HepG2 (cell line): ENCODE measurements at regions of chr3 and their contacts with region 1.

Region 1: GRCh38 chr3:14658978-14659377 is 7.4 kb downstream of the CCDC174 start:
- DNase-seq: no peak
- ATAC-seq: no peak
- H3K4me3 ChIP-seq: no peak overlapping the region
- H3K27ac ChIP-seq: no peak overlapping the region
- H3K4me1 ChIP-seq: peaks cover 2% of the 10 kb centered on the region; the same call in 1 of the 2 replicates
- H3K27me3 ChIP-seq: no peaks in the 10 kb centered on the region
- CTCF ChIP-seq: no peak
- EP300 ChIP-seq: no peak
- POLR2A ChIP-seq: no peak
- RAD21 ChIP-seq: no peak

Region 2: DNA sequence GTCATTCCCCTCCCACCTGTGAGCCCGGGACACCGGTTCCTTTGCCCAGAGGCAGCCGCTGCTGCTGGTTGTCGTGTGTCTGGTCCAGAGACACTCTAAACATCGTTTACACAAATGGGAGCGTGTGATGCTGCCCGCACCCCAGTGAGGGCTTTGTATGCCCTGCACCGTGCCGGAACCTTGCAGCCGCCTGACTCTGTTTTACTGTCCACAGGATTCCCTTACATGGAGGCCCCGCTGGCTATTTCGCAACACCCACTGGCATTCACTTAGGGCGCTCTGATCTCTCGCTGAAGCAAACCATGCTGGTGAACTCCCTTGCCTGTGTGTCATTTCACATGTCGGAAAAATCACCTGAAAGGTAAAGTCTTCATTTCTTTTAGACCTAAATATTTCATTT is 357.4 kb before region 1 on chr3:
- CTCF ChIA-PET with region 1: no interaction called
- POLR2A ChIA-PET with region 1: no interaction called
- in situ Hi-C with region 1: no loop called
- intact Hi-C with region 1: loop called (anchors 5 kb)
- DNase-seq: peak; percentile 63
- ATAC-seq: peak; percentile 86
- H3K4me3 ChIP-seq: no peak overlapping the region
- H3K27ac ChIP-seq: no peak overlapping the region
- H3K4me1 ChIP-seq: peaks cover 15% of the 10 kb centered on the region
- H3K27me3 ChIP-seq: peaks cover 6 to 37% of the 10 kb centered on the region in 2 experiments
- CTCF ChIP-seq: no peak
- EP300 ChIP-seq: peak in 1 of 2 experiments; percentile 19; a peak in 1 of 4 replicates
- POLR2A ChIP-seq: no peak
- RAD21 ChIP-seq: no peak